ENCODE measurements at regions of chr10 and their contacts with region 1.

Region 1: GRCh38 chr10:86355571-86356038 is 11.0 kb downstream of the GRID1 start:
- DNase-seq: peak; percentile 44 to 75
- ATAC-seq: peak; percentile 68 to 90 (median 78)
- H3K4me3 ChIP-seq: no peak overlapping the region
- H3K27ac ChIP-seq: peak overlapping the region in 6 of 10 donors; percentile 23 to 76 (median 47)
- H3K4me1 ChIP-seq: peaks cover 0 to 46% (median 13%) of the 10 kb centered on the region in 9 donors
- H3K27me3 ChIP-seq: no peaks in the 10 kb centered on the region
- CTCF ChIP-seq: no peak

Region 2: GRCh38 chr10:86100581-86101061 is 255.0 kb before region 1 on chr10:
- intact Hi-C with region 1: loop called in 3 of 10 experiments (anchors 10 kb)
- DNase-seq: no peak
- ATAC-seq: peak in 1 of 8 donors; percentile 65
- H3K4me3 ChIP-seq: no peak overlapping the region
- H3K27ac ChIP-seq: no peak overlapping the region
- H3K4me1 ChIP-seq: no peaks in the 10 kb centered on the region
- H3K27me3 ChIP-seq: no peaks in the 10 kb centered on the region
- CTCF ChIP-seq: peak in 8 of 9 donors; percentile 9 to 54 (median 34)

Measured in heart right ventricle (tissue), 16 donors.